Heart right ventricle (tissue), 16 donors: ENCODE measurements at regions of chr1 and their contacts with region 1.

Region 1: GRCh38 chr1:203428981-203429599 is 46.5 kb upstream of the PRELP start:
- DNase-seq: no peak
- ATAC-seq: no peak
- H3K4me3 ChIP-seq: no peak overlapping the region
- H3K27ac ChIP-seq: no peak overlapping the region
- H3K4me1 ChIP-seq: peaks cover 0 to 14% (median 5%) of the 10 kb centered on the region in 9 donors
- H3K27me3 ChIP-seq: peaks cover 0 to 17% (median 0%) of the 10 kb centered on the region in 7 donors
- CTCF ChIP-seq: no peak

Region 2: DNA sequence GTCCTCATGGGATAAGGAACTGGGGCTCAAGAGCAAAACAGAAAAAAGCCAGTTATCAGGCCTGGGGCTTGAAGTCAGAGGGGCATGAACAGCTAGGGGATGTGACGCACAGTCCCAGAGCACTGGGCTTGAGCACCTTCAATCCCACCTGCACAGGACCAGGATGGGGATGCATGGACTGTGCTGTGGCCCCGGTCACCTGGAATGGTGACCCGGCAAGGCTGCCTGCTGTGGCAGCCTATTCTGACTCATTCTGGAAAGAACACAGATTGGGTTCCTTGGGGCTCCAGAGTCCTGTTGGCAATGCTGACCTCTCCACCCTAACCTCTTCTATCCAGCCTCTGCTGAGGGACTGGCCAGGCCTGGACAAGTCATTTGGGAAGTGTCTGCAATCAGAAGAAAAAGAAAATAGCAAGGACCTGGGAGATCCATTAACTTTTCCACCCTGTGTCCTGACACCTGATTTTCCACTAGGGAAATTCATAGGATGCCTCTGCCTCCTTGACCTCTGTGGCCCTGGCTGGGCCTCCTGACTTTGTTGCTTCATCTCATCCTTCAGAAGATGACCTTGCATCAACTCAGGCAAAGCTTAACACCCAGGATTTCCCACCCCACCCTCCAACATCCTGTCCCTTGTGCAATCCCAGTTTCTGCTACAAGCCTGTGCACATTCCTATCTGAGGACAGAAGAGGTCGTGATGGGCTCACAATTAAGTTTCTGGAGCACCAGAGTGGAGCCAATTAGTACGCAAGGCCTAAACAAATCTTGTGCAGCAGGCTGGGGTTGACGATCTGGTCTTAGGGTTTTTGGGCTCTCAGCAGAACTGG is 60.3 kb before region 1 on chr1:
- intact Hi-C with region 1: no loop called
- DNase-seq: peak; percentile 56 to 76
- ATAC-seq: peak; percentile 85 to 94 (median 92)
- H3K4me3 ChIP-seq: no peak overlapping the region
- H3K27ac ChIP-seq: peak overlapping the region in 9 of 10 donors; percentile 17 to 79 (median 56)
- H3K4me1 ChIP-seq: peaks cover 1 to 33% (median 26%) of the 10 kb centered on the region in 9 donors
- H3K27me3 ChIP-seq: peaks cover 0 to 7% (median 0%) of the 10 kb centered on the region in 7 donors
- CTCF ChIP-seq: peak in 8 of 9 donors; percentile 25 to 73 (median 56)

Region 3: GRCh38 chr1:203381151-203381751 is 47.8 kb before region 1 on chr1:
- intact Hi-C with region 1: loop called in 1 of 10 experiments (anchors 5 kb)
- DNase-seq: no peak
- ATAC-seq: peak in 3 of 8 donors; percentile 9 to 30 (median 18)
- H3K4me3 ChIP-seq: no peak overlapping the region
- H3K27ac ChIP-seq: peak overlapping the region in 2 of 10 donors; percentile 39 to 41
- H3K4me1 ChIP-seq: peaks cover 9 to 47% (median 34%) of the 10 kb centered on the region in 9 donors
- H3K27me3 ChIP-seq: no peaks in the 10 kb centered on the region
- CTCF ChIP-seq: no peak

Region 4: DNA sequence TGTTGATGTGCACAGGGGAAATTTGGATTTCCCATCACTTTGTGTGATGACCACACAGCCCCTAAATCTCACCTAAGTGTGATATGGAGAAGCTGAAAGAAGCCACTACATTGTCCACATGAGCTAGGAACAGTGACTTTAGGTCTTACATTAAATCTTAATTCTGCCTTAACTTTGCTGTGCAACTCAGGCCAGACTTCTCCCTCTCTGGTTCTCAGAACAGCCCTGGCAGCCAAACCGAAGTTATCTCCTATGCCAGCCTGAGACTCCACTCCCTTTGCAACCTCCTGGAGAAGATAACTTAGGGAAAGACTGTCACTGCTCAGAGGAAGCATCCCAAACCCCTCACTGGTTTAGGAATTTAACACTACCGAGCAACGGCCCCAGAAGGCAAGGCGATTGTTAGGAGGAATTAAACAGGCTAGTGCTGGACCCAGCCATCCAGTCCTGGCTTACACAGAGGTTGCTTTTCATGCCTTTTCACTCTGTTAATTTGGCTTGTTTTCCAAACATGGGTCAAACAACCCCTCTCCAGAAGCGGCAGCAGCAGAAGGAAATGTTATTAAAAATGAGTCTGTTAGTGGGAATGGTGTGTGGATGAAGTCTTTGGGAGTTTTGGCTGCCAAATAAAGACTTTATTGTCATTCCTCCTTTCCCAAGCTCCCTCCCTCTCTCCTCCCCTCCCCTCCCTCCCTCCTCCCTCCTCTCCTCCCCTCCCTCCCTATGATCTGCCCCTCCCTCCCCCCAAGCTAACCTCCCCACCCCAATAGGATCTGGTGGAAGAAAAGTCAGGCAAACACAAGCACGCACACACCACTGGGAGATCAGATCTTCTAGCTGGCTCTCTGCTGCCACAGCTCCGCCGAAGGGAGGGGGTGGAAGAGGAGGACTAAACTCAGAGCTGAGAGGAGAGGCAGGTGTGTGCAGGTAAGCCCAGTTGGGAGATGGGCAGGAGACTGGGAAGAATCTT is 46.2 kb after region 1 on chr1 and contains the start of gene PRELP:
- intact Hi-C with region 1: loop called in 1 of 10 experiments (anchors 1 kb)
- DNase-seq: peak; percentile 36 to 43
- ATAC-seq: peak; percentile 50 to 73 (median 67)
- H3K4me3 ChIP-seq: peak within 1 kb of the TSS in 9 of 10 donors; percentile 26 to 60 (median 47)
- H3K27ac ChIP-seq: peak within 1 kb of the TSS; percentile 44 to 83 (median 76)
- H3K4me1 ChIP-seq: peaks cover 0 to 52% (median 6%) of the 10 kb centered on the region in 9 donors
- H3K27me3 ChIP-seq: peaks cover 0 to 15% (median 0%) of the 10 kb centered on the region in 7 donors
- CTCF ChIP-seq: no peak
- total RNA-seq, gene PRELP: 3.3 to 37.1 (median 14.1) TPM